ENCODE measurements at regions of chr18 and their contacts with region 1.

Region 1: GRCh38 chr18:5653802-5654201 is 110.0 kb upstream of the EPB41L3 start:
- DNase-seq: no peak
- ATAC-seq: no peak
- H3K4me3 ChIP-seq: no peak overlapping the region
- H3K27ac ChIP-seq: no peak overlapping the region
- H3K4me1 ChIP-seq: no peaks in the 10 kb centered on the region
- H3K27me3 ChIP-seq: no peaks in the 10 kb centered on the region
- CTCF ChIP-seq: no peak

Region 2: DNA sequence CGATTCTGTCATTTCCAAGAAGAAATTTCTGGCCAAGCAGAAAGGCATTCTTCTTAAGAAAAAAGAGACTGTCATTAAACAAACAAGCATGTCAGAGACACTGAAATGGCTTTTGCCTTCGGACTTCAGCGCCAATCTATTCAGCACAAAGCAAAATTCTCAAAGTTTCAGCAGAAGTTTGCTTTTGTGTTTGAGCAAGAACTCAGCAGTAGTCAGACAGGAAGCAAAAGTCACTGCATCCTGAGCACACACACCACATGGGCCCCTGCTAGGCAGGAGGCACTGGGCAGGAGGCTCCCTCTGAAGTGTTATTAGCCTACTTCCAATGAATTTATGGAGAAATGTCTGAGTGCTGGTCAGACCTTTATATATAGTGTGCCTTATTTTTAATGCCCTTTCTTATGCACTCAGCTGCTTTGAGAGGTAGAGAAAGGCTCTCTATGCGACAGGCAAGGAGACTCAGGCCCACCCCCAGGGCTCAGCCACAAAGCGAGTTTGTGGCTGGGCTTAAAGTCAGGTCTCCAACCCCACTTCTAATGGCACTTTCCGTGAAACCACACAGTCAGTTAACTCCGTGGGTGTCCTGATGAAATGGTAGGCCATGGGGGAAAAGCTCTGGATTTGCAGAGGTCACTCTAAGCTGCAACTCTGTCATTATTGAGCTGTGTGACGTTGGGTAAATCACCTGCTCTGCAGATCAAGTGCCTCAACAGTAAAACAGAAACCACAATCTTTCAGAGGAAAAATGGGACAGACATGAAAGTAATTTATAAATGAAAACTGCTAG is 402.5 kb after region 1 on chr18:
- intact Hi-C with region 1: loop called in 1 of 2 experiments (anchors 10 kb)
- DNase-seq: no peak
- ATAC-seq: no peak
- H3K4me3 ChIP-seq: no peak overlapping the region
- H3K27ac ChIP-seq: no peak overlapping the region
- H3K4me1 ChIP-seq: no peaks in the 10 kb centered on the region
- H3K27me3 ChIP-seq: no peaks in the 10 kb centered on the region
- CTCF ChIP-seq: no peak

Measured in psoas muscle (tissue), 8 donors.